Activated CD4-positive, alpha-beta memory T cell treated with anti-CD3 and anti-CD28 coated beads for 36 hours (primary cell): ENCODE measurements at regions of chr12 and their contacts with region 1.

Region 1: DNA sequence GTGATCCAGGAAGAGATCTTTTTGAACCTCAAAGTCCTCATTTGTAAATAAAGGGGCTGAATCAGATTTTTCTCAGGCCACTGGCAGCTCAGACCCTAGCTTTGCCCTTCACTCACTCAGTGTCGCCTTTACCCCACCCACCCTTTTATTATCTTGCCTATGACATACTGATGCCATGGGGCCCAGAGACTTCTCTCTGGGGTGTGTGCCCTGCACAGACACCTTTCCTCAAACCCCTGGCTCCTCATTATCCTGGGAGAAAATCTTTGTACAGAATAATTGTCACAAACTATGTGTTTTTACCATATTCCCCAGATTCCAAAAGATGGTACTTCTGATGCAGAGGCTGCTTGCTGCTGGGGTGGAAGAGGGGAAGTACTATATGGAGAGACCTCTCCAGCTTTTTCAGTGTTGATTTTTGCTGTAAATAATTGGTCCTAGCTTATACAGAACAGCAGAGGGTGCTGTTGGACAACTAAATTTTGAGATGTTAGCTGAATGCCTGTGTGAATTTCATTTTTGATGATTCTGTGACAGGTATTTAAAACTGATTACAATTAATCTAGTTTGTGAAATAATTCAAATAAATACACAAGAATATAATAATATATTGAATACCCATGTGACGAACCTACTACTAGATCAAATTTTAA is 53.9 kb upstream of the DCD start:
- DNase-seq: no peak
- H3K4me3 Mint-ChIP-seq: no peak overlapping the region
- H3K27ac Mint-ChIP-seq: no peak overlapping the region
- H3K4me1 Mint-ChIP-seq: no peaks in the 10 kb centered on the region
- H3K27me3 Mint-ChIP-seq: peaks cover 4% of the 10 kb centered on the region

Region 2: GRCh38 chr12:54463034-54463433 is 239.0 kb before region 1 on chr12:
- CTCF ChIA-PET with region 1: no interaction called
- POLR2A ChIA-PET with region 1: no interaction called
- intact Hi-C with region 1: no loop called
- DNase-seq: no peak
- H3K4me3 Mint-ChIP-seq: no peak overlapping the region
- H3K27ac Mint-ChIP-seq: no peak overlapping the region
- H3K4me1 Mint-ChIP-seq: peaks cover 7% of the 10 kb centered on the region
- H3K27me3 Mint-ChIP-seq: peaks cover 11% of the 10 kb centered on the region

Region 3: DNA sequence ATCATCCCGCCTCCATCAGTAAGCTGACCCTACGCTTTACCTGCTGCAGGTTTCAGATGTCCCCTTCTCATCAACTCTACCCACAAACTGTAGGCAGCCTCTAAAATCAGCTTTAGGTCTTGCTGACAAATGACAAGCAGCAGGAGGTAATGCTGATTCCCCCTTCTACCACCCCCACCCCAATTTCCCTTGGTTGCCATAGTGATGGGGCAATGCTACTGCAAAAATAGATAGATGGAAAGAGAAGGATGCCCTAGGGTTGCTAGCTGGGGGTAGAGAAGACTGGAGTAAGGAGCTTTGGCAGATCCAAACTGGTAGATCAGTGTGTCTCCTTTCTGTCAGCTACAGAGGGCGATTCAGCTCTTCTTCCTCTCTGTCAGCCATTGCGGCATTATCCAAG is 172.5 kb before region 1 on chr12:
- CTCF ChIA-PET with region 1: no interaction called
- POLR2A ChIA-PET with region 1: no interaction called
- intact Hi-C with region 1: no loop called
- DNase-seq: no peak
- H3K4me3 Mint-ChIP-seq: no peak overlapping the region
- H3K27ac Mint-ChIP-seq: no peak overlapping the region
- H3K4me1 Mint-ChIP-seq: peaks cover 20% of the 10 kb centered on the region
- H3K27me3 Mint-ChIP-seq: no peaks in the 10 kb centered on the region

Region 4: GRCh38 chr12:54716261-54716660 is 14.2 kb after region 1 on chr12:
- CTCF ChIA-PET with region 1: interaction called, 14 read pairs
- POLR2A ChIA-PET with region 1: no interaction called
- intact Hi-C with region 1: no loop called
- DNase-seq: no peak
- H3K4me3 Mint-ChIP-seq: no peak overlapping the region
- H3K27ac Mint-ChIP-seq: no peak overlapping the region
- H3K4me1 Mint-ChIP-seq: no peaks in the 10 kb centered on the region
- H3K27me3 Mint-ChIP-seq: peaks cover 10% of the 10 kb centered on the region

Region 5: DNA sequence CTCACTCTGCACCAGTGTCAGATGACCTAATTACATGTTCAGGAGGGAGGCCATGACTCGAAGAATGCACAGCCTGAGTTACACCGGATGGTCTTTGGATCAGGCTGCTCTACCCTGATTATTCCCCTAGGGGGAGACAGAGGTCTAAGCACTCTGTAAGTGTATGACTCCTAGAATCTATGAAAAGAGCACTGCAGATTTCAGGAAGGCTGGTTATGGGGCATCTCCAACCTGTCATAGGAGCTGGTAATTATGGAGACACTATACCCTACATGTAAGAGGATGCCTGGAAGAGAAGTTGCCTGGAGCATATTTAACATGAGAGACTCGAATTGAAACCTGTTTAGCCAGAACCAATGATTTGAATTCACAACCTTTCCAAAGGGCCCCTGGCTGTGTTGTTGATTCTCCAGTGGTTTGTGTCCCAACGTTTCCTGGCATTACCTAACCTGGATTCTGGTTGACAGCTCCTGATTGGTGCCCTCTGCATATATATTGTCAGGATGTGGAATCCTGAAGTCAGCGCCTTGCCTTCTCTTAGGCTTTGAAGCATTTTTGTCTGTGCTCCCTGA is 152.0 kb after region 1 on chr12 and contains the start of gene MUCL1:
- CTCF ChIA-PET with region 1: interaction called, 7 read pairs
- POLR2A ChIA-PET with region 1: no interaction called
- intact Hi-C with region 1: loop called (anchors 5 kb)
- DNase-seq: peak; percentile 80
- H3K4me3 Mint-ChIP-seq: no peak within 1 kb of the TSS
- H3K27ac Mint-ChIP-seq: no peak within 1 kb of the TSS
- H3K4me1 Mint-ChIP-seq: peaks cover 17% of the 10 kb centered on the region
- H3K27me3 Mint-ChIP-seq: peaks cover 2% of the 10 kb centered on the region
- total RNA-seq, gene MUCL1: not detected

Region 6: GRCh38 chr12:55142669-55143565 is 440.9 kb after region 1 on chr12:
- CTCF ChIA-PET with region 1: interaction called, 11 read pairs
- POLR2A ChIA-PET with region 1: no interaction called
- intact Hi-C with region 1: loop called (anchors 5 kb)
- DNase-seq: peak; percentile 41
- H3K4me3 Mint-ChIP-seq: no peak overlapping the region
- H3K27ac Mint-ChIP-seq: no peak overlapping the region
- H3K4me1 Mint-ChIP-seq: peaks cover 5% of the 10 kb centered on the region
- H3K27me3 Mint-ChIP-seq: no peaks in the 10 kb centered on the region